ENCODE measurements at regions of chr17 and their contacts with region 1.

Region 1: DNA sequence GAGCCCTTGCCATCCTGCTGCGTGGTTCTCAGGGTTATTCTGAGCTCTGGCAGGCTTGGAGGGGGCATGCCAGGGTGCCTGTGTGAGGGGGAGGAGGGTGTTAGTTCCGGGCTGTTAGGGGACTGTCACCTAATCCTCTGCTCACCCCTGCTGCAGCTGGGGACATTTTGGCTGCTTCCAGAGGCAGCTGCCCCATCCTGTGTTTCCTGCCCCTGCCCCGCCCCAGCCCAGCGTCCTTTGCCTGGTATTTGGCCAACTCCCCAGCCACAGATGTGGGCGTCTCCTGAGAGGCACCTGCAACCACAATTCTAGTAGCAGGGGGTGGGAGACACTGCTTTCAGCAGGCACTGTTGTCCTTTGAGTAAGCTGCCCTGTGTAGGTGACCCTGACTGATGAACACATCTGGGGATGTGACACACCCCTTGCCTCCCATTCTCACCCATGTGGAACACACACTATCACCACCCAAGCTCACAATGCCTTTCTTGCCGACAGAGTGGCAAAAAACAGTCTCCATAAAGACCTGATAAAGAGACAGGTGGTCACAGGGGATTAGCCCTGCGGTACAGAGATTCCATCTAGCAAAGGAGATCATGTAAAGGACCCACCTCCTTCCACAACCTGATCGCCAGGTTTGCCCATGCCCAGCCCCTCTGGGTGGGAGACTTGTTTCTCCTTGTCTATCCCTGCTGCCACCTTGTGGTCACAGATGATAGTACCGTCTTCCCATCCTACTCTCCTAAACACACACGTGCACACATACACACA is at the start of gene CHRNE:
- DNase-seq: peak; percentile 71
- ATAC-seq: peak; percentile 74
- H3K4me3 ChIP-seq: no peak within 1 kb of the TSS; a peak in 1 of 4 replicates
- H3K27ac ChIP-seq: no peak within 1 kb of the TSS
- H3K4me1 ChIP-seq: peaks cover 1% of the 10 kb centered on the region
- H3K27me3 ChIP-seq: no peaks in the 10 kb centered on the region
- CTCF ChIP-seq: peak; percentile 89
- total RNA-seq, gene CHRNE: 0.13 TPM

Region 2: DNA sequence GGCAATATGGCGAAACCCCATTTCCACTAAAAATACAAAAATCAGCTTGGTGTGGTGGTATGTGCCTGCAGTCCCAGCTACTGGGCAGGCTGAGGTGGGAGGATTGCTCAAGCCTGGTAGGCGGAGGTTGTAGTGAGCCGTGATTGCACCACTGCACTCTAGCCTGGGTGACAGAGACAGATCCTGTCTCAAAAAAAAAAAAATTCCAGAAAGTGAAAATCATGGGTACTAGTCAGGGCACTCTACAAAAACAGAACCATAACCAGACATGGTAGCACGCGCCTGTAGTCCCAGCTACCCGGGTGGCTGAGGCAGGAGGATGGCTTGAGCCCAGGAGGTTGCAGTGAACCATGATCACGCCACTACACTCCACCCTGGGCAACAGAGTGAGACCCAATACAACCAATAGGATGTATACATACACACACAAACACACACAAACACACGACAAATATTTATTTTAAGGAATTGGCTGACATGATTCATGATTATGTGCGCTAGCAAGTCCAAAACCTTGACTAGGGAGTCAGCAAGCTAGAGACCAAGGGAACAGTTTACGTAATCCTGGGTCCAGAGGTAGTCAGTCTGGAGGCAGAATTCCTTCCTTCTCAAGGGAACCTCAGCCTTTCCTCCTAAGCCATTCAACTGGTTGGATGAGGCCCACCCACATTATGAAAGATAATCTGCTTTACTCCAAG is 17.3 kb after region 1 on chr17:
- CTCF ChIA-PET with region 1: no interaction called
- POLR2A ChIA-PET with region 1: no interaction called
- in situ Hi-C with region 1: no loop called
- intact Hi-C with region 1: no loop called
- DNase-seq: no peak
- ATAC-seq: no peak
- H3K4me3 ChIP-seq: no peak overlapping the region
- H3K27ac ChIP-seq: no peak overlapping the region
- H3K4me1 ChIP-seq: no peaks in the 10 kb centered on the region
- H3K27me3 ChIP-seq: no peaks in the 10 kb centered on the region
- CTCF ChIP-seq: no peak

Region 3: DNA sequence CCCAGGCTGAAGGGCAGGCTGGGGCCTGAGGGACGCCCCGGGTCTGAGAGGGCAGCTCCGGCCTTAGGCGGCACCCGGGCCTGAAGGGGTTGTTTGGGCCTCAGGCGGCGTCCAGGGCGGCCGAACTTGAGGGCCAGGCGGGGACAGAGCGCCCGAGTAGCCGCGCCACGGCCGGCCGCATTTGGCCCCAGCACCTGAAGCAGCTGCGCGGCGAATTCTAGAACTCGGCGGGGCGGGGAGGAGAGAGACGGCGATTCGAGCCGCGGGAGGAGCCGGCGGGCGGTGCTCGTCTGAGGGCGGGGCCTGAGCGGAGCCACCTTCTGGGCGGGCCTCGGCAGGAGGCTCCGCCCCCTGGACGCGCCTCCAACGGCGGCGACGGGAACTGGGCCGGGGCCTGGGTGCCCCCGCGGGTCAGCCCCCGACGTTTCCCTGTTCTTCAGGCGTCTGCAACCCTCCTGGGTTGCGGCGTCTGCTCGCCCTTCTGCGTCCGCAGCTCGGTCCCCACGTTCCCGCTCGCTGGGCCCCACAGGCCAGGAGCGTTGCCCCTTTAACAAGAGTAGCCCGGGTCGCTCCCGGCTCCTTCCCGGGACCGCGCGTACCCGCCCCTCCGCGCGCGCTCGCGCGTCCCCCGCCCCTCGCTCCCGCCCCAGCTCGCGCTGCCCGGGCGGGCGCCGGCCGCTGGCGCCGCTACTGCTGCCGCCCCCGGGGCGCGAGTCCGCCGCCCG is 94.2 kb after region 1 on chr17 and contains the starts of genes INCA1 and KIF1C:
- CTCF ChIA-PET with region 1: no interaction called
- POLR2A ChIA-PET with region 1: no interaction called
- in situ Hi-C with region 1: no loop called
- intact Hi-C with region 1: no loop called
- DNase-seq: peak; percentile 33
- ATAC-seq: peak; percentile 96
- H3K4me3 ChIP-seq: peak within 1 kb of the TSS; percentile 74 to 79
- H3K27ac ChIP-seq: peak within 1 kb of the TSS; percentile 83
- H3K4me1 ChIP-seq: no peaks in the 10 kb centered on the region
- H3K27me3 ChIP-seq: no peaks in the 10 kb centered on the region
- CTCF ChIP-seq: no peak
- total RNA-seq, gene INCA1: 1.7 TPM
- total RNA-seq, gene KIF1C: 117 TPM

Region 4: GRCh38 chr17:5191541-5192417 is 288.5 kb after region 1 on chr17 and contains the start of gene ZNF594:
- CTCF ChIA-PET with region 1: no interaction called
- POLR2A ChIA-PET with region 1: interaction called, 10 read pairs
- in situ Hi-C with region 1: no loop called
- intact Hi-C with region 1: no loop called
- DNase-seq: peak; percentile 77
- ATAC-seq: peak; percentile 100
- H3K4me3 ChIP-seq: peak within 1 kb of the TSS; percentile 65 to 76
- H3K27ac ChIP-seq: peak within 1 kb of the TSS; percentile 83
- H3K4me1 ChIP-seq: no peaks in the 10 kb centered on the region
- H3K27me3 ChIP-seq: no peaks in the 10 kb centered on the region
- CTCF ChIP-seq: peak; percentile 90
- total RNA-seq, gene ZNF594: 5.6 TPM

Measured in Panc1 (cell line).